SK-N-SH (cell line): ENCODE measurements at regions of chr5 and their contacts with region 1.

Region 1: GRCh38 chr5:103808464-103809106 is 246.0 kb upstream of the NUDT12 start:
- DNase-seq: peak; percentile 61
- H3K4me3 ChIP-seq: no peak overlapping the region; a peak in 1 of 4 replicates
- H3K27ac ChIP-seq: peak overlapping the region in 1 of 2 experiments; percentile 64; a peak in 2 of 4 replicates
- H3K4me1 ChIP-seq: peaks cover 0 to 3% of the 10 kb centered on the region in 2 experiments; a peak in 1 of 4 replicates
- H3K27me3 ChIP-seq: no peaks in the 10 kb centered on the region
- CTCF ChIP-seq: peak; percentile 99
- EP300 ChIP-seq: peak in 1 of 2 experiments; percentile 25; a peak in 1 of 4 replicates
- RAD21 ChIP-seq: peak; percentile 100

Region 2: DNA sequence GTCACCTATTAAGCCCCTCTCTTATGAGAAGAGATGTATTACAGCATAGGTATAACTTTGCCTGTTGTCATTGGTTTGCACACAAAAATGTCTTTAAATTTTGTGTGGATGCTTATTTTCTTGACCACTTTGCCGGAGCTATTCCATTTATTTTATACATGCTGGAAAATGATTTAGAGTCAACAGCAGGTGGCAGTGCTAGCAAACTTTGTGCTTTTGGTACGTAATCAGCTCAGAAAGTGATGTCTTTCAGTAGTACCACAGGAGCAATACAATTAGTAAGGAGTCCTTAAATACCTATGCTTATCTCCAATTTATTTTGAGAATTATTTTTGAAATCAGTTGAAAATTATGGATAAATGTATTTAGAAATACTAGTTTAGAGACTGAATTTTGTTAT is 226.2 kb before region 1 on chr5:
- CTCF ChIA-PET with region 1: interaction called, 44 read pairs
- POLR2A ChIA-PET with region 1: no interaction called
- DNase-seq: peak; percentile 32
- H3K4me3 ChIP-seq: no peak overlapping the region; a peak in 1 of 4 replicates
- H3K27ac ChIP-seq: no peak overlapping the region
- H3K4me1 ChIP-seq: no peaks in the 10 kb centered on the region; a peak in 1 of 4 replicates
- H3K27me3 ChIP-seq: no peaks in the 10 kb centered on the region
- CTCF ChIP-seq: peak; percentile 72
- EP300 ChIP-seq: no peak
- RAD21 ChIP-seq: peak; percentile 82

Region 3: GRCh38 chr5:103793595-103794182 is 14.9 kb before region 1 on chr5:
- CTCF ChIA-PET with region 1: interaction called, 11 read pairs
- POLR2A ChIA-PET with region 1: no interaction called
- DNase-seq: no peak
- H3K4me3 ChIP-seq: no peak overlapping the region
- H3K27ac ChIP-seq: no peak overlapping the region
- H3K4me1 ChIP-seq: no peaks in the 10 kb centered on the region
- H3K27me3 ChIP-seq: no peaks in the 10 kb centered on the region
- CTCF ChIP-seq: no peak
- EP300 ChIP-seq: no peak
- RAD21 ChIP-seq: no peak

Region 4: GRCh38 chr5:103860327-103860726 is 51.7 kb after region 1 on chr5:
- CTCF ChIA-PET with region 1: interaction called, 12 read pairs
- POLR2A ChIA-PET with region 1: no interaction called
- DNase-seq: peak; percentile 14
- H3K4me3 ChIP-seq: no peak overlapping the region
- H3K27ac ChIP-seq: peak overlapping the region in 1 of 2 experiments; percentile 63; a peak in 2 of 4 replicates
- H3K4me1 ChIP-seq: no peaks in the 10 kb centered on the region; a peak in 2 of 4 replicates
- H3K27me3 ChIP-seq: no peaks in the 10 kb centered on the region
- CTCF ChIP-seq: no peak
- EP300 ChIP-seq: peak in 1 of 2 experiments; percentile 89; a peak in 2 of 4 replicates
- RAD21 ChIP-seq: no peak; the same call in 1 of the 2 replicates

Region 5: GRCh38 chr5:103973669-103974068 is 165.1 kb after region 1 on chr5:
- CTCF ChIA-PET with region 1: no interaction called
- POLR2A ChIA-PET with region 1: no interaction called
- DNase-seq: no peak
- H3K4me3 ChIP-seq: no peak overlapping the region
- H3K27ac ChIP-seq: no peak overlapping the region
- H3K4me1 ChIP-seq: no peaks in the 10 kb centered on the region
- H3K27me3 ChIP-seq: no peaks in the 10 kb centered on the region
- CTCF ChIP-seq: peak; percentile 26; the same call in 1 of the 2 replicates
- EP300 ChIP-seq: no peak
- RAD21 ChIP-seq: no peak